ENCODE measurements at regions of chr14 and their contacts with region 1.

Region 1: GRCh38 chr14:78164238-78164853 is 5.8 kb upstream of the NRXN3 start:
- DNase-seq: peak; percentile 50 to 82
- H3K4me3 ChIP-seq: no peak overlapping the region
- H3K27ac ChIP-seq: no peak overlapping the region
- H3K4me1 ChIP-seq: peaks cover 0 to 5% (median 0%) of the 10 kb centered on the region in 4 experiments; a peak in 1 of 7 replicates
- H3K27me3 ChIP-seq: no peaks in the 10 kb centered on the region
- CTCF ChIP-seq: peak; percentile 86 to 99 (median 99)
- EP300 ChIP-seq: no peak
- POLR2A ChIP-seq: no peak
- RAD21 ChIP-seq: peak; percentile 82 to 89

Region 2: DNA sequence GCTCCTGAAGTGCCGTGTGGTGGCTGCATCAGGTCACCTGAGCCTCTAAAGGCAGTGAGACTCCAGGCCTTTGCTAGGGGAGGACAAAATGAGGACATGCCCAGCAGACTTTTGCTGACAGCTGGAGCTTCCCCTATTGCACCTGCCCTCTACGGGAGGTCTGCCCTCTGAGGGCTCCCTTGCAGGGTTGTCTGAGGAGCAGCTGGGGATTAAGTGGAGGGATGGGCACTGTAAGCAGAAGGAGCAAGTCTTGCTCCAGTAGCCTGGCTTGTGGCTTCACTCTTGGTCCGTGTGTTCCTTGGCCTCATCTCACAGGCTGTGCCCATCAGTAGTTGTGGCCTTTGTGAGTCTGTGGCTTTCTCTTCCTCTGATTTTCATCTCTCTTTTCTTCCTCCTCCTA is 61.1 kb before region 1 on chr14:
- CTCF ChIA-PET with region 1: no interaction called
- POLR2A ChIA-PET with region 1: no interaction called
- DNase-seq: no peak
- H3K4me3 ChIP-seq: no peak overlapping the region
- H3K27ac ChIP-seq: no peak overlapping the region
- H3K4me1 ChIP-seq: peaks cover 0 to 2% (median 0%) of the 10 kb centered on the region in 4 experiments; a peak in 2 of 7 replicates
- H3K27me3 ChIP-seq: no peaks in the 10 kb centered on the region; a peak in 1 of 7 replicates
- CTCF ChIP-seq: no peak
- EP300 ChIP-seq: no peak
- POLR2A ChIP-seq: no peak
- RAD21 ChIP-seq: no peak

Region 3: GRCh38 chr14:78182722-78183121 is 18.4 kb after region 1 on chr14:
- CTCF ChIA-PET with region 1: interaction called, 17 read pairs
- POLR2A ChIA-PET with region 1: no interaction called
- DNase-seq: no peak
- H3K4me3 ChIP-seq: no peak overlapping the region
- H3K27ac ChIP-seq: no peak overlapping the region
- H3K4me1 ChIP-seq: no peaks in the 10 kb centered on the region
- H3K27me3 ChIP-seq: no peaks in the 10 kb centered on the region
- CTCF ChIP-seq: no peak
- EP300 ChIP-seq: no peak
- POLR2A ChIP-seq: no peak
- RAD21 ChIP-seq: no peak